ENCODE measurements at regions of chr4 and their contacts with region 1.

Region 1: GRCh38 chr4:169861593-169861992 is 103.8 kb upstream of the HPF1 start:
- DNase-seq: no peak
- H3K4me3 ChIP-seq: no peak overlapping the region
- H3K27ac ChIP-seq: no peak overlapping the region
- H3K4me1 ChIP-seq: no peaks in the 10 kb centered on the region
- H3K27me3 ChIP-seq: no peaks in the 10 kb centered on the region
- CTCF ChIP-seq: no peak

Region 2: GRCh38 chr4:169890906-169891305 is 29.3 kb after region 1 on chr4:
- CTCF ChIA-PET with region 1: no interaction called
- dilution Hi-C with region 1: no loop called
- in situ Hi-C with region 1: no loop called
- intact Hi-C with region 1: no loop called
- DNase-seq: no peak
- H3K4me3 ChIP-seq: no peak overlapping the region
- H3K27ac ChIP-seq: no peak overlapping the region
- H3K4me1 ChIP-seq: no peaks in the 10 kb centered on the region
- H3K27me3 ChIP-seq: no peaks in the 10 kb centered on the region
- CTCF ChIP-seq: peak in 1 of 2 donors; percentile 10

Region 3: GRCh38 chr4:169945636-169946035 is 84.0 kb after region 1 on chr4:
- CTCF ChIA-PET with region 1: no interaction called
- dilution Hi-C with region 1: loop called (anchors 5 kb)
- in situ Hi-C with region 1: no loop called
- intact Hi-C with region 1: no loop called
- DNase-seq: no peak
- H3K4me3 ChIP-seq: no peak overlapping the region
- H3K27ac ChIP-seq: no peak overlapping the region
- H3K4me1 ChIP-seq: no peaks in the 10 kb centered on the region
- H3K27me3 ChIP-seq: peaks cover 4% of the 10 kb centered on the region
- CTCF ChIP-seq: no peak

Region 4: DNA sequence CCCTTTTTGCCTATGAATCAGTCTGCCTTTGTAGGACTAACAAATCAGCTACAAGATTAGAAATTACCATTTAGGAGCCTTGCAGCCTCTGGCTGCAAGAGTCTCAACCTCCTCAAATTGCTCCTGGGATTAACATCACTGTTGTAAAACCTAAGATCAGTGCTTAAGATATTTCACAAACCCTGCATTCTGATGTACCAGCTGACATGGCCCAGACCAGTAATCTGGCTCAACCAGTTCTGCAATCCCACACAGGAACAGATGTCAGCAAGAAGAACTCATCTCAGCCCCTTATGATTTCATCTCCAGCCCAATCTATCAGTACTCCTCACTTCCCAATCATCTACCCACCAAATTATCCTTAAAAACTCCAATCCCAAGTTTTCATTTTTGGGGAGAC is 260.7 kb after region 1 on chr4:
- CTCF ChIA-PET with region 1: no interaction called
- dilution Hi-C with region 1: no loop called
- in situ Hi-C with region 1: no loop called
- intact Hi-C with region 1: no loop called
- DNase-seq: peak; percentile 53
- H3K4me3 ChIP-seq: no peak overlapping the region
- H3K27ac ChIP-seq: no peak overlapping the region
- H3K4me1 ChIP-seq: peaks cover 5% of the 10 kb centered on the region
- H3K27me3 ChIP-seq: no peaks in the 10 kb centered on the region
- CTCF ChIP-seq: no peak

Measured in mammary epithelial cell (primary cell).